ENCODE measurements at regions of chr3 and their contacts with region 1.

Region 1: GRCh38 chr3:17233398-17233800 is 348.6 kb downstream of the PLCL2 start:
- DNase-seq: peak; percentile 30
- H3K4me3 Mint-ChIP-seq: no peak overlapping the region
- H3K27ac Mint-ChIP-seq: no peak overlapping the region
- H3K4me1 Mint-ChIP-seq: peaks cover 15% of the 10 kb centered on the region
- H3K27me3 Mint-ChIP-seq: no peaks in the 10 kb centered on the region

Region 2: DNA sequence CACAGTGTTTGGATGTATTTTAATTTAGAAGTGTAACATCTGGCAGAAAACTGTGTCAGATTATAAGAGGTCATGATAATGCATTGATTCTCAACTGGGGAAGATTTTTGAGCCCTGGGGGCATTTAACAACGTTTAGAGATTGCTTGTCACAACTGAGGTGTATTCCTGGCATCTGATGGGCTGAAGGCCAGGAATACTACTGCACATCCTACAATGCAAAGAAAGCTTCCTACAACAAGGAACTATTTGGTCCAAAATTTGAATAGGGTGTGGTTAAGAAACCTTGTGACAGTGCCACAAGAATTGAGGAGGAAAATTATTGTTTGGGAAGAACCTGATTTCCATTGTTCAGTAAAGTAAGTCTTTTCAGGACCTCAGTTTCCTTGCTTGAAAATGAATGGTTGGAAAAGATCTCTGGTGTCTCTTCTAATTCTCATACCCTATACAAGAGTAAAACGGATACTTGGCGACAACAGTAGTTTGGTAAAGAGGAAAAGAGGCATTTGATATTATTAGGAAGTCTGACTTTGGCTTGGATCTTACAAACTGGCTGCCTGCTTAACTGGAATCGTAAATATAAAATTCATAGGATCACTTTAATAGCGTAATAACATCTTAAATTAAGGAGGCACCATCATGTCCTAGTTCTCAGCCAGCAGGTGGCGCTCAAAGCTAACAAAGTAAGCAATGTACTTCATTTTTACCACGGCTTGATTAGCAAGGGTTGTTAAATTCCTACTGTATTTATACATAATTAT is 632.4 kb before region 1 on chr3:
- CTCF ChIA-PET with region 1: interaction called, 40 read pairs
- POLR2A ChIA-PET with region 1: no interaction called
- DNase-seq: peak; percentile 82
- H3K4me3 Mint-ChIP-seq: no peak overlapping the region
- H3K27ac Mint-ChIP-seq: no peak overlapping the region
- H3K4me1 Mint-ChIP-seq: peaks cover 27% of the 10 kb centered on the region
- H3K27me3 Mint-ChIP-seq: peaks cover 46% of the 10 kb centered on the region

Region 3: GRCh38 chr3:16828815-16829214 is 404.6 kb before region 1 on chr3:
- CTCF ChIA-PET with region 1: interaction called, 13 read pairs
- POLR2A ChIA-PET with region 1: no interaction called
- DNase-seq: peak; percentile 67
- H3K4me3 Mint-ChIP-seq: no peak overlapping the region
- H3K27ac Mint-ChIP-seq: no peak overlapping the region
- H3K4me1 Mint-ChIP-seq: peaks cover 18% of the 10 kb centered on the region
- H3K27me3 Mint-ChIP-seq: peaks cover 9% of the 10 kb centered on the region

Measured in activated CD4-positive, alpha-beta memory T cell treated with anti-CD3 and anti-CD28 coated beads, Interleukin-2, amount 10 ng/mL, durations not matched to agents 7 days and 5 days (primary cell).